ENCODE measurements at regions of chr9 and their contacts with region 1.

Region 1: DNA sequence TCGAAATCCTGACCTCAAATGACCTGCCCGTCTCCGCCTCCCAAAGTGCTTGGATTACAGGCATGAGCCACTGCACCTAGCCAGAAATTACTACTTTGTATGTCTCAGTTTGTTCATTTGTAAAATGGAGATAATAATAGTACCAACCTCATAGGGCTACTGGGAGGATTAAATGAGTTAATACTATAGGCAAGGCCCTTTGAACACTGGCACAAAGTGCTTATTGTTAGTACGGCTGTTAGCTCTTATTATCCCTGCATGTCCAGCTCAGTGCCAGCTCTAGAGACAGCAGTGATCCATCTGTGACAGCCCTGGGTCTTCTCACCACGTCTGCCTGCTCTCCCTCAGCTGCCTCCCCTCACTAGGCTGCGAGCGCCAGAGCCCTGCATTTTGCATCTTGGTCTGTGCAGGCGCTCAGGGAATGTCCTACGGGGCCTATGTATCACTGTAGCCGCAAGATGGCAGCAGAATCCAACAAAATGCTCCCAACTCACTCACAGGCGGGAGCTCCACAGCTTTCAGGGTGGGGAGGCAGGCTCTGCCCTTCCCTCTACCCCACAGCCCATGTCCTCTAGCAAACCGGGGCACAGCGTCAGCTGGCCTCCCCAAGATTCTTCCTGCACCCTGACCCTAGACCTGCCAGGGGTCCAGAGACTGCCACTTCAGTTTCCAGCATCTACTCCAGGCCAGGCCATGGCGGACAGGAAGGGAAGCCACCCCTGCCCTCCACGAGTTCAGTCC is 17.7 kb upstream of the AKNA start:
- DNase-seq: peak; percentile 82
- ATAC-seq: peak; percentile 93
- H3K4me3 Mint-ChIP-seq: no peak overlapping the region
- H3K27ac Mint-ChIP-seq: no peak overlapping the region
- H3K4me1 Mint-ChIP-seq: peaks cover 19% of the 10 kb centered on the region
- H3K27me3 Mint-ChIP-seq: no peaks in the 10 kb centered on the region
- CTCF ChIP-seq: peak; percentile 66

Region 2: DNA sequence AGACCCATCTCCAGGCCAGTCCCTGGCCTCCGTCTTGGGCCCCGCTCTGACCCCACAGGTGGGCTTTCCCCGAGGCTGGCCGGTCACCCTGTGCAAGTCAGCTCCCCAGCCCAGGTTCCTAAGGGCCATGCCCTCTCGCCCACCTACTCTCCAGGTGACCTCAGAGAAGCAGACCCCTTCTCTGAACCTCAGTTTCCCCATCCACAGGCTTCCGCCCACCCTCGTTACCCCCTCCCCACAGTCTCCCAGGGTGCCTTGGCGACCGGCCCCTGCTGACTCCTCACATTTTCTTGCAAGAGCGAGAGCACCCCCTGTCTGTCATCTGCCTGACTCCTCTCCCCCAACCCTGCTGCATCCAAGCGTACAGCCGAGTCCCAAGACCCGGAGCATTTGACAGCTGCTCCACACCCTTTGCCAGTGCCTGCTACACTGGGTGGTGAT is 133.8 kb before region 1 on chr9:
- CTCF ChIA-PET with region 1: no interaction called
- POLR2A ChIA-PET with region 1: no interaction called
- DNase-seq: peak; percentile 58
- ATAC-seq: peak; percentile 73
- H3K4me3 Mint-ChIP-seq: no peak overlapping the region
- H3K27ac Mint-ChIP-seq: no peak overlapping the region
- H3K4me1 Mint-ChIP-seq: no peaks in the 10 kb centered on the region
- H3K27me3 Mint-ChIP-seq: no peaks in the 10 kb centered on the region
- CTCF ChIP-seq: no peak

Region 3: DNA sequence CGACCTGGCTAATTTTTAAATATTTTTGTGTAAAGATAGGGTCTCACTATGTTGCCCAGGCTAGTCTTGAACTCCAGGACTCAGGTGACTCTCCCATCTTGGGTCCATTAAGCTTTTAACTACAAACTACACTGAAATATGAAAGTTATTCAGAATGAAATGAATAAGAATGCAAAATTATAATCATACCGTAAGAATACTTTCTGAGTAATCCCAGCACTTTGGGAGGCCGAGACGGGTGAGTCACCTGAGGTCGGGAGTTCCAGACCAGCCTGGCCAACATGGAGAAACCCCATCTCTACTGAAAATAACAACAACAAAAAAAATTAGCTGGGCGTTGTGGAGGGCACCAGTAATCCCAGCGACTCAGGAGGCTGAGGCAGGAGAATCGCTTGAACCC is 83.7 kb before region 1 on chr9:
- CTCF ChIA-PET with region 1: no interaction called
- POLR2A ChIA-PET with region 1: no interaction called
- DNase-seq: no peak
- ATAC-seq: no peak
- H3K4me3 Mint-ChIP-seq: no peak overlapping the region
- H3K27ac Mint-ChIP-seq: no peak overlapping the region
- H3K4me1 Mint-ChIP-seq: 0 out of 2 replicates have a peak, but pooled peaks cover under 1% of the 10 kb centered on the region
- H3K27me3 Mint-ChIP-seq: peaks cover 5% of the 10 kb centered on the region
- CTCF ChIP-seq: no peak

Region 4: DNA sequence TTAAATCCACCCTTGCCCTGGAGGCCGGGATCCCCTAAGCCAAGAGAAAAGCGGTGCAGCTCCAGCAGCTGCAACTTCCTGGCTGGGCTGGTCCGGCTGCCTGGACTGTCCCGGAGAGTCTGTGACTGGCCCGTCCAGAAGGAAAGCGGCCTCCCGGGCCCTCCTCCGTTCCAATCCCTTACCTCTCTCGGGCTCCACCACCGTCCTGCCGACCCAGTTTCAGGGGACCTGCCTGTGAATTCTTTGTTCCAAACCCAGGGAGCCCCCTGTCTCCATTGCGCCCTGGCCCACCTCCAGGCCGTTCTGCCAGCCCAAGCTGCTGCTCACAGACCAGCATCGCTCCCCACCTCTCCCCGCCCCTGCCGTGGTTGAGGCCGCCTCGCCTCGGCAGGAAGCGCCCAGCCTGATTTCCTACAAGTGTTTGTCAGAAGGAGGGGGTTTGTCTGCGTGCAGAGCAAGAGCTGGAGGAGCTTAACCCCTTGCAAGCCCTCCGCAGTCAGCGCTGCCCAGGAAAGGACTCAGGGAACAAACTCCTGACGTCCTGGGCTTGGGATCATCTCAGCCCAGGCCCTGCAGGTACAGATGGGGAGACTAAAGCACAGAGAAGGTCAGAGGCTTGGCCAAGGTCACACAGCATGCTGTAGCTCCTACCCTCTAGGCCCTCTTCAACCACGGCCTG is 17.6 kb before region 1 on chr9 and contains the start of gene AKNA:
- CTCF ChIA-PET with region 1: interaction called, 14 read pairs
- POLR2A ChIA-PET with region 1: no interaction called
- DNase-seq: peak; percentile 74
- ATAC-seq: peak; percentile 60
- H3K4me3 Mint-ChIP-seq: peak within 1 kb of the TSS; percentile 53
- H3K27ac Mint-ChIP-seq: peak within 1 kb of the TSS; percentile 59
- H3K4me1 Mint-ChIP-seq: peaks cover 76% of the 10 kb centered on the region
- H3K27me3 Mint-ChIP-seq: no peaks in the 10 kb centered on the region
- CTCF ChIP-seq: no peak
- total RNA-seq, gene AKNA: 26.0 to 29.3 TPM (median 27.5 TPM) in 3 replicates

Region 5: DNA sequence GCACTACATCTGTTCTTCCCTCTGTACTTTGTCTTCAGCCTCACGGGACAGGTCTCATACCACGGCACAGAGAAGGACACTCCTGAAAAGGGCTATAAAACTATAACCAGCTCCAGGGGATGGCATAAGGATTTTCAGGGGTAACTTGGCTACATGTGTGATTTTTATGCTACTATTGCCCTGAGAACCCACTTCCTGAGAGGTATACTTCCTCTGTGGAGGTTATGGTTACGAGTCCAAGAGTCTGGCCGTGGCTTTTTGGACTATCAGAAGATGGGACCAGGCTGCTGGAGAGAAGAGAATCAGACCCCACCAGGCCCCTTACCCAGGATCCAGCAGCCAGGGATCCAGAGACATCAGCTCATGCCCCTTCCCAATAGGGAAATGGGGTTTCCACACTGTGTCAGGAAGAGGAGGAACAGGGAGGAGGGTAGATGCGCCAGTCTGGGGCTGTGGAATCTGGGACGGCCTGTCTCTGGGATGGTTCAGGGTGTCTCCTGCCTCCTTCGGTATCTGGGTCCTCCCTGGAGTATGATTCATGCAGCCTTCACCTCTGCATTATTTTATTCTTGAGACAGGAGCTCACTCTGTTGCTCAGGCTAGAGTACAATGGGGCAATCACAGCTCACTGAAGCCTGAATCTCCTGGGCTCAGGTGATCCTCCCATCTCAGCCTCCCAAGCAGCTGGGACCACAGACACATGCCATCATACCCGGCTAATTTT is 70.1 kb after region 1 on chr9:
- CTCF ChIA-PET with region 1: interaction called, 14 read pairs
- POLR2A ChIA-PET with region 1: no interaction called
- DNase-seq: no peak
- ATAC-seq: no peak
- H3K4me3 Mint-ChIP-seq: no peak overlapping the region
- H3K27ac Mint-ChIP-seq: no peak overlapping the region
- H3K4me1 Mint-ChIP-seq: peaks cover 12% of the 10 kb centered on the region
- H3K27me3 Mint-ChIP-seq: no peaks in the 10 kb centered on the region
- CTCF ChIP-seq: no peak

Region 6: GRCh38 chr9:114518599-114519022 is 113.1 kb after region 1 on chr9:
- CTCF ChIA-PET with region 1: interaction called, 11 read pairs
- POLR2A ChIA-PET with region 1: no interaction called
- DNase-seq: no peak
- ATAC-seq: peak; percentile 67
- H3K4me3 Mint-ChIP-seq: no peak overlapping the region
- H3K27ac Mint-ChIP-seq: no peak overlapping the region
- H3K4me1 Mint-ChIP-seq: peaks cover 4% of the 10 kb centered on the region; the same call in 1 of the 2 replicates
- H3K27me3 Mint-ChIP-seq: peaks cover 33% of the 10 kb centered on the region
- CTCF ChIP-seq: no peak

Region 7: DNA sequence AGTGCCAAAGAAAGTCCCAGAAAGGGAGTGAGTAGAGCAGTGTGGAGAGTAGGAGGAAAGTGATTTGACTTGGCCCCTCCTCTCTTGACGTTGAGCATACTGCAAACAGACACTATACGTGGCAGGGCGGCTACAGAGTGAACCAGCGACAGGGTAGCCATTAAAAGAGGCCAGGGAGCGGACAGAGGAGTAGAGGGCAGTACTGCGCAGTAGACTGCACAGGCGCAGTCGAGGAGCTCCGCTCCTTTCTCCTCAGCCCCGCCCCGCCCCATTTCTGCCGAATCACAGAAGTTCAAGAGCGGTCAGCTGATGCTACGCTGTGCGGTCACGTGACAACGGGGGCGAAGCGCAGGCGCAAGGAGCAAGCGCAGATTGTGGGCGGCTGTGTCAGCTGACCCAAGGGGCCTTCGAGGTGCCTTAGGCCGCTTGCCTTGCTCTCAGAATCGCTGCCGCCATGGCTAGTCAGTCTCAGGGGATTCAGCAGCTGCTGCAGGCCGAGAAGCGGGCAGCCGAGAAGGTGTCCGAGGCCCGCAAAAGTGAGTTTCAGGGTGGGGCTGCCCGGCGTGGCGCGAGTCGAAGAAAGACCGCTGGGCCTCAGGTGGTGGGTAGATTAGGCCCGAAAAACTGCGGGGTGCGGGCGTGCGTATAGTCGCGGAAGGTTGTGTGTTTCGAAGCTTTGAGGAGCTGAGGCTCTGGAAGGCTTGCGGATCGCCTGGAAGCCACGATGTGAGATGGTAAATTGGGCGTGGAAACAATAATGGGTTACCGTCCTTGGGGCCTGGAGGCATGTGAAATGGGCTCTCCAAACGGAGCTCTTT is 182.1 kb after region 1 on chr9 and contains the start of gene ATP6V1G1:
- CTCF ChIA-PET with region 1: interaction called, 10 read pairs
- POLR2A ChIA-PET with region 1: no interaction called
- DNase-seq: peak; percentile 100
- ATAC-seq: peak; percentile 90
- H3K4me3 Mint-ChIP-seq: peak within 1 kb of the TSS; percentile 100
- H3K27ac Mint-ChIP-seq: peak within 1 kb of the TSS; percentile 94
- H3K4me1 Mint-ChIP-seq: peaks cover 52% of the 10 kb centered on the region
- H3K27me3 Mint-ChIP-seq: no peaks in the 10 kb centered on the region
- CTCF ChIP-seq: no peak
- total RNA-seq, gene ATP6V1G1: 91.3 to 108 TPM (median 92.4 TPM) in 3 replicates

Region 8: GRCh38 chr9:114906908-114907571 is 501.6 kb after region 1 on chr9:
- CTCF ChIA-PET with region 1: interaction called, 21 read pairs
- POLR2A ChIA-PET with region 1: no interaction called
- DNase-seq: peak; percentile 74
- ATAC-seq: peak; percentile 89
- H3K4me3 Mint-ChIP-seq: no peak overlapping the region
- H3K27ac Mint-ChIP-seq: no peak overlapping the region
- H3K4me1 Mint-ChIP-seq: peaks cover 24% of the 10 kb centered on the region
- H3K27me3 Mint-ChIP-seq: peaks cover 36% of the 10 kb centered on the region
- CTCF ChIP-seq: 0 out of 2 replicates have a peak, but pooled peaks have one; percentile 42

Region 9: GRCh38 chr9:114968671-114969070 is 563.2 kb after region 1 on chr9:
- CTCF ChIA-PET with region 1: no interaction called
- POLR2A ChIA-PET with region 1: no interaction called
- DNase-seq: no peak
- ATAC-seq: no peak
- H3K4me3 Mint-ChIP-seq: no peak overlapping the region
- H3K27ac Mint-ChIP-seq: no peak overlapping the region
- H3K4me1 Mint-ChIP-seq: peaks cover 4% of the 10 kb centered on the region
- H3K27me3 Mint-ChIP-seq: peaks cover 12% of the 10 kb centered on the region
- CTCF ChIP-seq: no peak

Measured in WTC11 (cell line).